ENCODE measurements at regions of chr11 and their contacts with region 1.

Region 1: DNA sequence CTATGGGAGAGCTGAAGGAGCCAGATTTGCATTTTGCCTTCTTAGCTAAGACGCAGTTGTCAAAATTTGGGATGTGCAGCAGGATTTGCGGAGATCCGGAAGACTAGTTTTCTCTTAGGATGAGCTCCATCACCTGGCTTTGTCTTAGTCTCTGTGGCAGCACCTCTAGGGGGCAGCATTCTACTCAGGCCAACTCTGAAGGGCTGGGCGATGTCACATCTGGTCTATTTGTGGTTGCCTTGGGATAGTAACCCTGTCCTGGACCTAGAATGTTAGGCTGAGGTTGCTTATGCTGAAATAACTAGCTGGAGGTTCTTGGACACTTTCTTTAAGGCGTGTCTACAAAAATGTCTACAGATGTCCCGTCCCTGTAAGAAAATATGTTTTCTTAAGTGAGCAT is 116.2 kb downstream of the FAT3 start:
- DNase-seq: peak; percentile 69
- ATAC-seq: peak; percentile 94
- H3K4me3 Mint-ChIP-seq: no peak overlapping the region
- H3K27ac Mint-ChIP-seq: no peak overlapping the region
- H3K4me1 Mint-ChIP-seq: peaks cover 32% of the 10 kb centered on the region
- H3K27me3 Mint-ChIP-seq: no peaks in the 10 kb centered on the region
- CTCF ChIP-seq: peak; percentile 70

Region 2: GRCh38 chr11:92311616-92312449 is 29.0 kb before region 1 on chr11:
- CTCF ChIA-PET with region 1: interaction called, 19 read pairs
- POLR2A ChIA-PET with region 1: no interaction called
- DNase-seq: no peak
- ATAC-seq: peak; percentile 87
- H3K4me3 Mint-ChIP-seq: peak overlapping the region; percentile 21
- H3K27ac Mint-ChIP-seq: peak overlapping the region; percentile 92
- H3K4me1 Mint-ChIP-seq: peaks cover 88% of the 10 kb centered on the region
- H3K27me3 Mint-ChIP-seq: no peaks in the 10 kb centered on the region
- CTCF ChIP-seq: no peak

Region 3: DNA sequence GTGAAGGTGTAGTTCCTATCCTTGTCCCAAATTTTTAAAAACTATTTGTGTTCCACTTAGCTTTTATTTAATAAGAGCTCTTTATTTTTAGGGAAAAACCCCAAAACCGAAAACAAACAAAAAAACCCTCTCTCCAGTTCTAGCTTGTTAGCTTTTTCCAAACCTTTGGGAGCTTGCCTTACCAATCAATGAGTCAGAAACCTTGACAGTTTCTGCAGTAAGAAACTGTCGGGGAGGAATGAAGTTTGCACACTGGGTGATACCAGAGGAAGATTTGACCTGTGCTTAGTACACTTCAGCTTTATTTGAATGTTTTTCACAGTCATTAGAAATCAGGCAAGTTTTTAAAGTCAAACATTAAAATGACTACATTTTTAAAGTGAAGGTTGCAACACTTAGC is 11.2 kb before region 1 on chr11:
- CTCF ChIA-PET with region 1: interaction called, 43 read pairs
- POLR2A ChIA-PET with region 1: no interaction called
- DNase-seq: no peak
- ATAC-seq: no peak
- H3K4me3 Mint-ChIP-seq: no peak overlapping the region
- H3K27ac Mint-ChIP-seq: peak overlapping the region; percentile 96
- H3K4me1 Mint-ChIP-seq: peaks cover 69% of the 10 kb centered on the region
- H3K27me3 Mint-ChIP-seq: no peaks in the 10 kb centered on the region
- CTCF ChIP-seq: no peak

Region 4: GRCh38 chr11:92357344-92357743 is 16.5 kb after region 1 on chr11:
- CTCF ChIA-PET with region 1: interaction called, 10 read pairs
- POLR2A ChIA-PET with region 1: no interaction called
- DNase-seq: no peak
- ATAC-seq: no peak
- H3K4me3 Mint-ChIP-seq: no peak overlapping the region
- H3K27ac Mint-ChIP-seq: no peak overlapping the region
- H3K4me1 Mint-ChIP-seq: peaks cover 6% of the 10 kb centered on the region
- H3K27me3 Mint-ChIP-seq: no peaks in the 10 kb centered on the region
- CTCF ChIP-seq: no peak

Region 5: GRCh38 chr11:92480499-92480898 is 139.7 kb after region 1 on chr11:
- CTCF ChIA-PET with region 1: no interaction called
- POLR2A ChIA-PET with region 1: no interaction called
- DNase-seq: no peak
- ATAC-seq: no peak
- H3K4me3 Mint-ChIP-seq: no peak overlapping the region
- H3K27ac Mint-ChIP-seq: no peak overlapping the region
- H3K4me1 Mint-ChIP-seq: peaks cover 5% of the 10 kb centered on the region
- H3K27me3 Mint-ChIP-seq: no peaks in the 10 kb centered on the region
- CTCF ChIP-seq: no peak

Measured in WTC11 (cell line).